ENCODE measurements at regions of chr19 and their contacts with region 1.

Region 1: DNA sequence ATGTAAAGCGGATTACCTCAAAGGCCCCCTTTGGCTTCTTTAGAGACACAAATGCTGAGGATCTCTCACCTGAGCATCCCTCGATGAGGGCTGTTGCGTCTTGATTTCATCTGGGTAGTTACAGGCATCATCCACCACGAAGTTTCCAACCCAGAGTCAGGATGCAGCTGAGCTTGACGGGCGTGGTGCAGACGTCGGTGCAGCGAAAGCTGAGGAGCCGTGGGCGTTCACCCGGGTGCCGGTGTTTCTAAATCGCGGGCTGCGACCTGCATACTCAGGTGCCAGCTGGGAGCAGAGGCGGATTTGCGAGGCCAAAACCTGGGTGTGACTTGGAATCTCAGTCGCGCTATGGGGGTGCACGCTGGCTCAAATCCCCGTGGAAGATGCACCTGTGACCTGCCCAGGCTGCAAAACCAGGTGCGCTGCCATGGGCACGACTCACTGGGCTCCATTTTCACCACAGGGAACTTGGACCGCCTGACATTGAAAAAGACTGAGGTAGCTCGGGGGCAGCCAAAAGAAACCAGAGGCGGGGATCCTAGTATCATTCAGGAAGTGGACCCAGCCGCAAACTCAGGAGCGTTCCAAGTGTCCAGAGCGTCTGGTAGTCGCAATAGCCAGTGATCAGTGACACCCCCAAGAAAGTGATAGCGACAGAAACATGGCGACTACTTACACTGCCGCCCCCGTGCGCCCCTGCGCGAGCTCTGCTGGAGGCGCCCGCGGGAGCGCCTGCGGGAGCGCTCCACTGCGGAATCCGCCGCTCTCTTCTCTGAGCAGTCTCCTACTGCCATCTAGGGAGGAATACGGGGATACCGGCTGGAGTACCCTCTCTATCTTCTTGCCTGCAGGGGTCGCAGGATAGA is 36.4 kb upstream of the IGFL4 start:
- DNase-seq: peak; percentile 87
- ATAC-seq: peak; percentile 98
- H3K4me3 ChIP-seq: peak overlapping the region; percentile 63 to 80 (median 65)
- H3K27ac ChIP-seq: no peak overlapping the region
- H3K4me1 ChIP-seq: peaks cover 33% of the 10 kb centered on the region
- H3K27me3 ChIP-seq: no peaks in the 10 kb centered on the region; a peak in 1 of 5 replicates
- CTCF ChIP-seq: peak; percentile 96
- EP300 ChIP-seq: no peak
- POLR2A ChIP-seq: no peak
- RAD21 ChIP-seq: peak; percentile 96

Region 2: DNA sequence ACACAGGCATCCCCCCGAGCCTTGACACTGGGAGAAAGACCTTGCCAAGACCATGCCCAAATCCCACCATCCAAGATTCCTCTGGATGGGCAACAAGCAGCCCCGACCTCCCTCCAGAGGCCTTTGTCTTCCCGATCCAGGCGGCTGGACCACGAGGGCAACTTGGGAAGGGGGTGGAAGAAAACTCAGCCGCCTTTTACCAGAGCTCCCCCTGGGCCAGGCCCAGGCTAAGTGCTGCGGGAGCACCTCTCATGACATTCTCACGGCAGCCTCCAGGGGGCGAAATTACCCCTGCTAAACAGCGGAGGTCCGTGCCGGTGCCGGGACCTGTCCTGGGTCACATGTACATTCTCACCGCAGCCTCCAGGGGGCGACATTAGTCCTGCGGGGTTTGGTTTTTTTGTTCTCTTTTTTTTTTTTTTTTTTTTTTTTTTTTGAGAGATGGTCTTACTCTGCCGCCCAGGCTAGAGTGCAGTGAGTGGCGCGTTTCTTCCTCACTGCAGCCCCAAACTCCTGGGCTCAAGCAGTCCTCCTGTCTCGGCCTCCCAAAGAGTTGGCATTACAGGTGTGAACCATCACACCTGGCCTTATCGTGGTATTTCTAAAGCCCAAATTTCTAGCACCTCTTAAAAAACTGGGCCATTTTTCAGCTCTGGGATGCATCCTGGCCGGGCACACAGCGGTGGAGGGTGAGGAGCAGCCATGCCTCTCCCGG is 260.0 kb before region 1 on chr19:
- CTCF ChIA-PET with region 1: interaction called, 6 read pairs
- POLR2A ChIA-PET with region 1: no interaction called
- in situ Hi-C with region 1: no loop called
- intact Hi-C with region 1: loop called (anchors 5 kb)
- DNase-seq: peak; percentile 87
- ATAC-seq: peak; percentile 87
- H3K4me3 ChIP-seq: no peak overlapping the region
- H3K27ac ChIP-seq: no peak overlapping the region
- H3K4me1 ChIP-seq: no peaks in the 10 kb centered on the region
- H3K27me3 ChIP-seq: no peaks in the 10 kb centered on the region
- CTCF ChIP-seq: peak; percentile 95
- EP300 ChIP-seq: no peak
- POLR2A ChIP-seq: no peak
- RAD21 ChIP-seq: peak; percentile 80

Region 3: DNA sequence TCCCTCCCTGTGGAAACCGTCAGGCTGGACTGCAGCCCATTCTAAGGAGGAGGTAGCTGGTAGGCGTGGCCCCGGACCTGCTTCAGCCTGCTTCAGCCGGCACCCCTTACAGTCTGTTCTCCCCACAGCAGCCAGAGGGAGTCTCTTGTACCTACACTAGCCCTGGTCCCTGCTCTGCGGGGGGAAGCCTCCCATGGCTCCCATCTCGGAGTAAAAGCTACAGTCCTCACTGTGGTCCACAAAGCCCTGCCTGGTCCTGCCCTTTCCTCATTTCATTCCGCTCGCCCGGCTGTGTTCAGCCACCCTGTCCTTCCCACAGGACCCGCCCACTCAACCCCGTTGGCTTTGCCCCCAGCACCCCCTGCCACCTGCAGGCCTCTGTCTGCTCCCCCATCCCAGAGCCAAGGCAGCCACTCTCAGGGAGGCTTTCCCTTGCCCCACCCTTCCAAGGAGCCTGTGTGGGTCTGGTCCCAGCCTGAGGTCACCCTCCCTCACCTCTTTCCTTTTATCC is 55.6 kb before region 1 on chr19:
- CTCF ChIA-PET with region 1: interaction called, 166 read pairs
- POLR2A ChIA-PET with region 1: no interaction called
- in situ Hi-C with region 1: loop called (anchors 5 kb)
- intact Hi-C with region 1: no loop called
- DNase-seq: no peak
- ATAC-seq: no peak
- H3K4me3 ChIP-seq: no peak overlapping the region
- H3K27ac ChIP-seq: no peak overlapping the region
- H3K4me1 ChIP-seq: peaks cover 5% of the 10 kb centered on the region
- H3K27me3 ChIP-seq: no peaks in the 10 kb centered on the region
- CTCF ChIP-seq: 0 out of 2 replicates have a peak, but pooled peaks have one; percentile 8
- EP300 ChIP-seq: no peak
- POLR2A ChIP-seq: no peak
- RAD21 ChIP-seq: no peak

Region 4: GRCh38 chr19:46035986-46036743 is 41.0 kb before region 1 on chr19:
- CTCF ChIA-PET with region 1: interaction called, 7 read pairs
- POLR2A ChIA-PET with region 1: no interaction called
- in situ Hi-C with region 1: no loop called
- intact Hi-C with region 1: loop called (anchors 2 kb)
- DNase-seq: no peak
- ATAC-seq: peak; percentile 43
- H3K4me3 ChIP-seq: no peak overlapping the region
- H3K27ac ChIP-seq: no peak overlapping the region
- H3K4me1 ChIP-seq: peaks cover 19% of the 10 kb centered on the region
- H3K27me3 ChIP-seq: no peaks in the 10 kb centered on the region
- CTCF ChIP-seq: no peak
- EP300 ChIP-seq: no peak
- POLR2A ChIP-seq: no peak
- RAD21 ChIP-seq: no peak

Region 5: DNA sequence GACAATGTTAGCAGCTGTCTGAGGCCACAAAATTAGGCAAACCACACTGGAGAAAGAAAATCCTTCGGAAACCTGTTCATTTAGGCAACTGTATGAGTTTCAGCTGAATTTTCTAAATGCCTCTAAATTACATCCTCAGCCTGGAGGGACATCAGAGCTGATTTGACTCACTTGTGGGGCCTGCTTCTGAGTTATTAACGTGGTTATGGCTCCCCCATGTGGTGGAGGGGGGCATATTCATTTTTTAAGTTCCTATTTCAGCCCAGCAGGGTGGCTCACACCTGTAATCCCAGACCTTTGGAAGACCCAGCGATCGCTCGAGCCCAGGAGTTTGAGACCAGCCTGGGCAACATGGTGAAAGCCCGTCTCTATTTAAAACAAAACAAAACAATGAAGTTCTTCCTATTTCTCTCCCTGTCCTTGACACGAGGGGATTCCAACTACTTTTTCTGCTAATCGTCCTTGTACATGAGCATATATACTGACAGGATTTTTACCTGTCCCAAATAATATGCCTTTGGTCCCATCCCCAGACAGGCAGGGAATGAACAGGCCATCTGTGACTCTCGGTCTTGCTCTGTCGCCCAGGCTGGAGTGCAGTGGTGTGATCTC is 188.1 kb after region 1 on chr19:
- CTCF ChIA-PET with region 1: interaction called, 57 read pairs
- POLR2A ChIA-PET with region 1: no interaction called
- in situ Hi-C with region 1: loop called (anchors 5 kb)
- intact Hi-C with region 1: loop called (anchors 1 kb)
- DNase-seq: peak; percentile 70
- ATAC-seq: peak; percentile 92
- H3K4me3 ChIP-seq: no peak overlapping the region
- H3K27ac ChIP-seq: no peak overlapping the region
- H3K4me1 ChIP-seq: no peaks in the 10 kb centered on the region
- H3K27me3 ChIP-seq: peaks cover 0 to 11% of the 10 kb centered on the region in 2 experiments; a peak in 3 of 5 replicates
- CTCF ChIP-seq: peak; percentile 85
- EP300 ChIP-seq: no peak
- POLR2A ChIP-seq: no peak
- RAD21 ChIP-seq: peak; percentile 75

Measured in HepG2 (cell line).